Activated CD4-positive, alpha-beta memory T cell treated with anti-CD3 and anti-CD28 coated beads for 36 hours (primary cell): ENCODE measurements at regions of chr5 and their contacts with region 1.

Region 1: GRCh38 chr5:123423278-123424149 is at the start of gene CEP120:
- DNase-seq: peak; percentile 98
- H3K4me3 Mint-ChIP-seq: no peak within 1 kb of the TSS
- H3K27ac Mint-ChIP-seq: no peak within 1 kb of the TSS
- H3K4me1 Mint-ChIP-seq: peaks cover 32% of the 10 kb centered on the region
- H3K27me3 Mint-ChIP-seq: no peaks in the 10 kb centered on the region
- total RNA-seq, gene CEP120: 31.7 to 33.2 TPM

Region 2: DNA sequence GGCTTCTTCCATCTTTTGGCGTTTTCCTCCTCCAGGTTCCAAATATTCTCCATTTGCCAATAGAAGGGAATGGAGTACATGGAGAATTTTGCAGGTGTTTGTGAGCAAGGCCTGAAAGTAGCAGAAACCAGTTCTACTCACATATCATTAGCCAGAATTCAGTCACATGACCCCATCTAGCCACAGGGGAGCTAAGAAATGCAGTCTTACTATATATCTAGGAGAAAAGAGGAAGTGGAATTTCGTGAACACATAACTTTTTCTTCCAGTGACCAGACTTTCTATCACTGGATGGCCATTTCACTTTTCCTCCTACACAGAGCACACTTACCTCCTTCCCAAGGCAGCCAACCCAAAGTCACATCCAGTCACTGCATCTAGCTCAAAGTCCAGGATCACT is 1400.5 kb before region 1 on chr5:
- CTCF ChIA-PET with region 1: no interaction called
- POLR2A ChIA-PET with region 1: no interaction called
- intact Hi-C with region 1: no loop called
- DNase-seq: no peak
- H3K4me3 Mint-ChIP-seq: no peak overlapping the region
- H3K27ac Mint-ChIP-seq: no peak overlapping the region
- H3K4me1 Mint-ChIP-seq: peaks cover 12% of the 10 kb centered on the region
- H3K27me3 Mint-ChIP-seq: no peaks in the 10 kb centered on the region

Region 3: GRCh38 chr5:122845229-122846050 is 578.1 kb before region 1 on chr5 and contains the start of gene SNX24:
- CTCF ChIA-PET with region 1: no interaction called
- POLR2A ChIA-PET with region 1: no interaction called
- intact Hi-C with region 1: loop called (anchors 1 kb)
- DNase-seq: peak; percentile 83
- H3K4me3 Mint-ChIP-seq: peak within 1 kb of the TSS; percentile 81
- H3K27ac Mint-ChIP-seq: peak within 1 kb of the TSS; percentile 28
- H3K4me1 Mint-ChIP-seq: peaks cover 24% of the 10 kb centered on the region
- H3K27me3 Mint-ChIP-seq: no peaks in the 10 kb centered on the region
- total RNA-seq, gene SNX24: 6.4 to 7.5 TPM

Region 4: DNA sequence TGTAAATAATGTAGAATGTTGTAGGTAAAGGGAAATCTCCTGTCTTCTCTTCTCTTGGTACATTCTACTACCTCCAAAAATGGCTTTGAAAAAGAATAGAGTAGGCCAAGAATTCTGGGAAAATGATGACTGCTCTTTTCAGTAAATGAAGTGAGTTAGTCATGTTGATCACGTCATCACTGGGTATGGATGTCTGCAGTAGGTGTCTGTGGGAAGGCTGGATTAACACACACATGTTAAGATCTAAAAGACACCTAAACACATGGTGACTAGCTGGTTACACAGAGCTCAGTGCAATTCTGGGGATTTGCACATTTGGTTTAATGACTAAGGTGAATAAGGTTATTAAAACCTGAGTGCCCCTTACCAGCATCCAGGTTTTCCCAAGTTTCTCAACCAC is 161.8 kb before region 1 on chr5:
- CTCF ChIA-PET with region 1: no interaction called
- POLR2A ChIA-PET with region 1: no interaction called
- intact Hi-C with region 1: no loop called
- DNase-seq: no peak
- H3K4me3 Mint-ChIP-seq: no peak overlapping the region
- H3K27ac Mint-ChIP-seq: no peak overlapping the region
- H3K4me1 Mint-ChIP-seq: no peaks in the 10 kb centered on the region
- H3K27me3 Mint-ChIP-seq: peaks cover 4% of the 10 kb centered on the region

Region 5: GRCh38 chr5:123438902-123439301 is 15.4 kb after region 1 on chr5:
- CTCF ChIA-PET with region 1: interaction called, 27 read pairs
- POLR2A ChIA-PET with region 1: interaction called, 31 read pairs
- intact Hi-C with region 1: loop called (anchors 1 kb)
- DNase-seq: peak; percentile 51
- H3K4me3 Mint-ChIP-seq: no peak overlapping the region
- H3K27ac Mint-ChIP-seq: peak overlapping the region; percentile 67
- H3K4me1 Mint-ChIP-seq: peaks cover 31% of the 10 kb centered on the region
- H3K27me3 Mint-ChIP-seq: no peaks in the 10 kb centered on the region

Region 6: DNA sequence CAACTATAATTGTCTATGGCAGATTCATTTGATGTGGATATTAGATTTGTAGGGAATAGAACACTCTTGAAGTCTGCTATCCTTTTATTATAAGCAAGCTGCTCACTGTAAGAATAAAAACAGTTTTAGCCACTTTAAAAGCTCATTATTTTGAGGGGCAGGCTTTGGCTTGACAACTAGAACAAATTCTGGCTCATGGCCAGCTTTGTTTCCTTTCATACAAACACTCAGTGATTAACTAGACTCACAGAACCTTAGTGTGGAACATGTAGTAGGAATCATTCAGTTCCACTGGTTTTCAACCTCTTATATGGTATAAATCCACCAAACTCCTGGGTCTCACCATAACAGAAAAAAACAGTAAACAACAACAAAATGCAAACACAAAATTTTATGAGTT is 27.1 kb after region 1 on chr5:
- CTCF ChIA-PET with region 1: interaction called, 15 read pairs
- POLR2A ChIA-PET with region 1: interaction called, 23 read pairs
- intact Hi-C with region 1: loop called (anchors 1 kb)
- DNase-seq: no peak
- H3K4me3 Mint-ChIP-seq: no peak overlapping the region
- H3K27ac Mint-ChIP-seq: no peak overlapping the region
- H3K4me1 Mint-ChIP-seq: peaks cover 27% of the 10 kb centered on the region
- H3K27me3 Mint-ChIP-seq: peaks cover 8% of the 10 kb centered on the region

Region 7: DNA sequence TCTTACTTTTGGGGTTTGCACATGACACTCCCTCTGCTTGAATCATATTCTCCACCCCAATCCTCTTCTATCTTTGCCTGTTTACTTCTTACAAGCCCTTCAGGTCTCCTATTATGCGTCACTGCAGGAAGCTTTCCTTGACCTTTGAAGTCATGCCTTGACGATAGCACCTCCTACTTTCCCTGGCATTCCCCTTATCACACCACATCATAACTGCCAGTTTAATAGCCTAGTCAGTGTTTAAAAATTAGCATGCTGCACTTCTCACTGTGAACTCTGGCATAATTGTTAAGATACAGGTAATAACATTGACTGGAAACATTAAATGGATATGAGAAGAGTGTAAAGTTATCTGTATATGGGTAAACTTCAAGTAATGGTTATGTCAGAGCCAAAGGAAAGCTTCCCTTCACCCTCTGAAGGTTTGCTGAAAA is 36.8 kb after region 1 on chr5:
- CTCF ChIA-PET with region 1: interaction called, 3 read pairs
- POLR2A ChIA-PET with region 1: no interaction called
- intact Hi-C with region 1: loop called (anchors 1 kb)
- DNase-seq: peak; percentile 61
- H3K4me3 Mint-ChIP-seq: no peak overlapping the region
- H3K27ac Mint-ChIP-seq: peak overlapping the region; percentile 87
- H3K4me1 Mint-ChIP-seq: peaks cover 17% of the 10 kb centered on the region
- H3K27me3 Mint-ChIP-seq: no peaks in the 10 kb centered on the region

Region 8: GRCh38 chr5:123545506-123545905 is 122.0 kb after region 1 on chr5:
- CTCF ChIA-PET with region 1: interaction called, 10 read pairs
- POLR2A ChIA-PET with region 1: interaction called, 9 read pairs
- intact Hi-C with region 1: no loop called
- DNase-seq: peak; percentile 22
- H3K4me3 Mint-ChIP-seq: no peak overlapping the region
- H3K27ac Mint-ChIP-seq: no peak overlapping the region
- H3K4me1 Mint-ChIP-seq: peaks cover 60% of the 10 kb centered on the region
- H3K27me3 Mint-ChIP-seq: no peaks in the 10 kb centered on the region

Region 9: GRCh38 chr5:123610665-123611405 is 187.3 kb after region 1 on chr5:
- CTCF ChIA-PET with region 1: interaction called, 33 read pairs
- POLR2A ChIA-PET with region 1: interaction called, 6 read pairs
- intact Hi-C with region 1: loop called (anchors 1 kb)
- DNase-seq: no peak
- H3K4me3 Mint-ChIP-seq: no peak overlapping the region
- H3K27ac Mint-ChIP-seq: no peak overlapping the region
- H3K4me1 Mint-ChIP-seq: peaks cover 10% of the 10 kb centered on the region
- H3K27me3 Mint-ChIP-seq: no peaks in the 10 kb centered on the region